Panc1 (cell line): ENCODE measurements at regions of chr6 and their contacts with region 1.

Region 1: GRCh38 chr6:88220493-88220892 is 54.3 kb upstream of the CNR1 start:
- DNase-seq: no peak
- ATAC-seq: no peak
- H3K4me3 ChIP-seq: no peak overlapping the region
- H3K27ac ChIP-seq: no peak overlapping the region
- H3K4me1 ChIP-seq: no peaks in the 10 kb centered on the region
- H3K27me3 ChIP-seq: 0 out of 2 replicates have a peak, but pooled peaks cover 2% of the 10 kb centered on the region
- CTCF ChIP-seq: no peak

Region 2: DNA sequence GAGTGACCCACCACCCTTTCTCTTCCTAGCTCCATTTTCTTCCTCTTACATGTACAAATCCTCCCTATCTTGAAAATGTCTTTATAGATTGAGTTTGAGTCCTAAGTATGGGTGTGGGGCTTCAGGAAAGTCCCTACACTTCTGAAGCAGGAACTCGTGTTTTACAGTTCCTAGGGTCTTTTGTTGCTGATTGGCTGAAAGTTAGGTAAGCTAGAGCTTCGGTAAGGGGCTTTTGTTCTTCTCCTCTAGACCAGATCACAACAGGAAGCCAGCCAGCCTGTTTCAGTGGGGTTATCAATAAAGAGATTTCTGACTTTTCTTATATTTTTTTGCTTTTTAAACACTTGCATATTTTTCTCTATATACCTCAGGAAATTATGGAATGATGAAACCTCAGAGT is 105.7 kb before region 1 on chr6:
- CTCF ChIA-PET with region 1: no interaction called
- POLR2A ChIA-PET with region 1: no interaction called
- in situ Hi-C with region 1: no loop called
- intact Hi-C with region 1: no loop called
- DNase-seq: no peak
- ATAC-seq: no peak
- H3K4me3 ChIP-seq: no peak overlapping the region
- H3K27ac ChIP-seq: no peak overlapping the region
- H3K4me1 ChIP-seq: no peaks in the 10 kb centered on the region
- H3K27me3 ChIP-seq: no peaks in the 10 kb centered on the region; the same call in 1 of the 2 replicates
- CTCF ChIP-seq: no peak

Region 3: DNA sequence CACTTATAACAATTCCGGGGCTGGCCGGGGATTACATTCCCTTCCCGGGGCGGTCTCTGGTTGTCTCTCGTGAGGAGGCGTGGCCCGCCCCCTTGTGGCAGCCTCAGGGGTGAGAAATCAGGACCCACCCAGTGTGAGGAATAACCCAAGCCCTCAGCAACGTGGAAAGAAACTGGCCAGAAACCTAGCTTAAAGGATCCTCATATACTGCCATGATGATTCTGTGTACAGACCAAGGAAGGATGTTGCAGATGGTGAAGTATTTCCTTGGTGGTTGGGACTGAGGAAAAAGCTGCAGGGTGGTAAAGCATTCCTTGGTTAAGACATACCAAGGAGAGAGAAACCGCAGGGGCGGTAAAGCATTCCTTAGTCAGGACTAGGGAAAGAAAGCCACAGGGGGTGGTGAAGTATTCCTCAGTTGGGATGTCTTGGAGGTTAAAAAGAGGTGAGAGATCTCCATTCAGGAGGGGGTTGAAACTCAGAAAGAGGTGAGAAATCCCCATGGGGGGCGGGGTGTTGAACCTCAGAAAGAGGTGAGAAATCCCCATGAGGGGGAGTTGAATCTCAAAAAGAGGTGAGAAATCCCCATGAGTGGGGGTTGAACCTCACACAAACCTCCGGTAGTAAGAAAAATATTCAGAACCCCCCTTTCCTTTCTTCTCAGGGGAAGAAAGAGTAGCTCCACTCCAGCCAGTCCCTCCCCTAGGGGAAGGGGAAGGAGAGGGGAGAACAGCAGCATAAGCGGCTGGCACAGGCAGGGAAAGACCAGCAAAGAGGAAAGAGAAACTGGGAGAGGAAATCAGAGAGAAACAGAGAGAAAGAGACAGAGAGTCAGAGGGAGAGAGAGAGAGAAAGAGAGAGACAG is 504.9 kb after region 1 on chr6:
- CTCF ChIA-PET with region 1: no interaction called
- POLR2A ChIA-PET with region 1: interaction called, 14 read pairs
- in situ Hi-C with region 1: no loop called
- intact Hi-C with region 1: no loop called
- DNase-seq: no peak
- ATAC-seq: no peak
- H3K4me3 ChIP-seq: no peak overlapping the region
- H3K27ac ChIP-seq: no peak overlapping the region
- H3K4me1 ChIP-seq: no peaks in the 10 kb centered on the region
- H3K27me3 ChIP-seq: no peaks in the 10 kb centered on the region
- CTCF ChIP-seq: peak; percentile 47